ENCODE measurements at regions of chr10 and their contacts with region 1.

Region 1: DNA sequence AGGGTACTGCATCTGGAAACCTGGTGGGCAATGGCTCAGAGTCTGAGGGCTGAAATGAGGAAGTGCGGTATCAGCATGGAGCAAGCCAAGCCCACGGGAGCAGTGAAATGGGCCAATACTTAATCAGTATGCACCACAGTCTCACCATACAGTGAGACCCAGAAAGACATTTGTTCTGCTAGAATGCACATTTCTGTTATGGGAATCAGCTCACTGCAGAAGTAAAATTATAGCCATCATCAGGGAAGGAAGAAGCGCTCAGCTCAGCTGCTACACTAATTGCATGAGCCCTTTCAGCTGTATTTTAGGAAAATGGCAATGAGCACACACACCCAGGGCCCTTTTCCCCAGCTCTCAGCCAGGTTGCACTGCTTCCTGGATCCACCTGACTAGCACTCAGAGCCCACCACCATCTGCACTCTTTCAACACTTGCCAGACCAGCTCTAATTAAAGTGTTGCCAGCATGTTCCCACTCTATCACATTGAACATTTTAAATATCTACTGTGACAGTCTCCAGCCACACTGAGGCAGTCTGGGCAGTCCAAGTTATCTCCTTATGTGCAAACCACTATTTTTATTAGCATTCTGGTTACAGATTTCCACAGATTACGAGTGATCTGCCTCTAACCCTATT is 44.2 kb upstream of the PIK3AP1 start:
- DNase-seq: peak in 2 of 3 donors; percentile 67 to 77
- H3K4me3 ChIP-seq: no peak overlapping the region
- H3K27ac ChIP-seq: no peak overlapping the region
- H3K4me1 ChIP-seq: peaks cover 0 to 14% (median 10%) of the 10 kb centered on the region in 4 experiments
- H3K27me3 ChIP-seq: no peaks in the 10 kb centered on the region

Region 2: DNA sequence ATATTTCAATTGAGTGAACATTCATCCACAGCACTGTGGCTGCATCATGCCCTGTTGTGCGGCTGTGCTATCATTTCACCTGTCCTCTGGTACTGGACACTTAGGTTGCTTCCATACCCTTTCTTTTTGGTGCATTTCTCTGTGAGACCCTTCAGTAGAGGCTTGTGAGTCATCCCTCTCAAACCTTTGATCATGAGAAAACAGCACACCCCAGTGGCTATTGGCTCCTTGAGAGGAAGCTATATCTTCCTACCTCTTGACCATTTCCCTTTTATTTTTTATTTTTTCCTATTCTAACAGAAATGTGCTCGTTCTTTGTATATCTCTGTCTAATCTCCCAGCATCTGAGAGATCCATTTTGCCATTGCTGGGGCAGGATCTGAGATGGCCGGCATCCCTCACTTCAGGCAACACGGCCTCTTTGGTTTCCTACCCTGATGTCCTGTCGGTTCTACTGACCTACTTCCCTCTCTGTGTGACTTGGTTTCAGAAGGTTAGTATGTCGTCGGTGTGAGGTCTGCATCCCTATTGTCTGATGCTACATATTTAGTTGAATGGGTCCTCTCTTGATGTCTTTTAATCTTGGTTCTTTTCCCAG is 20.5 kb before region 1 on chr10:
- CTCF ChIA-PET with region 1: interaction called, 10 read pairs
- POLR2A ChIA-PET with region 1: interaction called, 3 read pairs
- DNase-seq: peak in 2 of 3 donors; percentile 37 to 43
- H3K4me3 ChIP-seq: peak overlapping the region in 2 of 7 experiments; percentile 1 to 25
- H3K27ac ChIP-seq: no peak overlapping the region
- H3K4me1 ChIP-seq: peaks cover 25 to 63% (median 30%) of the 10 kb centered on the region in 4 experiments
- H3K27me3 ChIP-seq: no peaks in the 10 kb centered on the region

Region 3: GRCh38 chr10:97081621-97082235 is 317.2 kb after region 1 on chr10:
- CTCF ChIA-PET with region 1: no interaction called
- POLR2A ChIA-PET with region 1: no interaction called
- DNase-seq: peak; percentile 54 to 81 (median 74)
- H3K4me3 ChIP-seq: no peak overlapping the region
- H3K27ac ChIP-seq: no peak overlapping the region
- H3K4me1 ChIP-seq: no peaks in the 10 kb centered on the region
- H3K27me3 ChIP-seq: peaks cover 0 to 50% (median 15%) of the 10 kb centered on the region in 5 experiments